ENCODE measurements at regions of chrX and their contacts with region 1.

Region 1: GRCh38 chrX:37578045-37578444 is 6.6 kb downstream of the LANCL3 start:
- DNase-seq: no peak
- H3K4me3 Mint-ChIP-seq: no peak overlapping the region
- H3K27ac Mint-ChIP-seq: no peak overlapping the region
- H3K4me1 Mint-ChIP-seq: peaks cover 13% of the 10 kb centered on the region
- H3K27me3 Mint-ChIP-seq: no peaks in the 10 kb centered on the region
- CTCF ChIP-seq: no peak

Region 2: DNA sequence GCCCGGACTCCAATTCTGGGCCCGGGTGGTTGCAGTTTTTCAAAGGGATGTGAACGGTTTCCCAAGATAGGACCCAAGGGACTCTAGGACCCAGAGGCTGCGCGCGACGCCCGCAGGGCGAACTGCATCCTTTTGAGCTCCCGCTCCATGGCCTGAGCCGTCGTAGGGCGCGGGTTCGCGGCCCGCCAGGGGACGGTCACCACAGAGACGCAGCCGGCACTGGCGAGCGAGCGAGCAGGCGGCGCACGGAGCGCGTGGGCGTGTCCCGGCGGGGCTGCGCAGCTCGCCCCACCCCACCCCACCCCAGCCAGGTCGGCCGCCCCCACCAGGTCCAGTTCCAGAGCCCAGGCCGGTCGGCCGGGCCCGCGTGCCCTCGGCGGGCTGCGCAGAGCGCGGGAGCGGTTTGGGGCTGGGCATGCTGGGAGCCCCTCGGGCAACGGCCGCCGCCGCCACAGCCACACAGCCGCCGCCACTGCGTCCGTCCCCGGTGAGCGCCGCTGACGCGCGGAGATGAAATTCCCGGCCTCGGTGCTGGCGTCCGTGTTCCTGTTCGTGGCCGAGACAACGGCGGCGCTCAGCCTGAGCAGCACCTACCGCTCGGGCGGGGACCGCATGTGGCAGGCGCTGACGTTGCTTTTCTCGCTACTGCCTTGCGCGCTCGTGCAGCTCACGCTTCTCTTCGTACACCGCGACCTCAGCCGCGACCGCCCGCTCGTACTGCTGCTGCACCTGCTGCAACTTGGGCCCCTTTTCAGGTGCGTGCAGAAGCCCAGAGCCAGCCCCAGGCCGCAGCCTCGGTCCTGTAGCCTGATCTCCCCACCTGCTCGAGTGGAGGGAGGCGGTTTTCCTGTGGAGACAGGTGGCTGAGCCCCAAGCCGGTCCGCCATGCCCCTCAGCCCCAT is 107.7 kb after region 1 on chrX and contains the start of gene XK:
- CTCF ChIA-PET with region 1: no interaction called
- intact Hi-C with region 1: loop called (anchors 10 kb)
- DNase-seq: peak; percentile 75
- H3K4me3 Mint-ChIP-seq: peak within 1 kb of the TSS; percentile 89
- H3K27ac Mint-ChIP-seq: peak within 1 kb of the TSS; percentile 76
- H3K4me1 Mint-ChIP-seq: peaks cover 14% of the 10 kb centered on the region
- H3K27me3 Mint-ChIP-seq: no peaks in the 10 kb centered on the region
- CTCF ChIP-seq: no peak
- total RNA-seq, gene XK: 11.3 and 14.7 TPM in 2 replicates

Region 3: DNA sequence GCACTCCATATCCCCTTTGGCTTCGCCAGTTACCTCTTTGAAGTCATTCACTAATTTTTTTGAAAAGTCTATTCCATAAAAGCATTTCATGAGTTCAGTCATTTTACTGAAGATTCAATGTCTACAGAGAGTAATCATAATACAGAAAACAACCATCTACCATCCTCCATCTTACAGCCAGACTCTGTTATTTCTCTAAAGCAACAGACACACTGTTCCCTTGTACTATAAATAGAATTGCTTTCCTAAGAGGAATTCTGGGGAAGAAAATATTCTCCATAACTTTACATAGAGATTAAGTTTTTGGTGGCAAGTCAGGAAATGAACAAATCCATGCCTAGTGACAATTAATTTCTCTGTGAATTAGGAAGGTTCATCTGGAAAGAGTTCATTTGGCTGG is 144.6 kb after region 1 on chrX:
- CTCF ChIA-PET with region 1: no interaction called
- intact Hi-C with region 1: loop called (anchors 10 kb)
- DNase-seq: no peak
- H3K4me3 Mint-ChIP-seq: no peak overlapping the region
- H3K27ac Mint-ChIP-seq: no peak overlapping the region
- H3K4me1 Mint-ChIP-seq: no peaks in the 10 kb centered on the region
- H3K27me3 Mint-ChIP-seq: no peaks in the 10 kb centered on the region
- CTCF ChIP-seq: no peak